ENCODE measurements at regions of chr21 and their contacts with region 1.

Region 1: DNA sequence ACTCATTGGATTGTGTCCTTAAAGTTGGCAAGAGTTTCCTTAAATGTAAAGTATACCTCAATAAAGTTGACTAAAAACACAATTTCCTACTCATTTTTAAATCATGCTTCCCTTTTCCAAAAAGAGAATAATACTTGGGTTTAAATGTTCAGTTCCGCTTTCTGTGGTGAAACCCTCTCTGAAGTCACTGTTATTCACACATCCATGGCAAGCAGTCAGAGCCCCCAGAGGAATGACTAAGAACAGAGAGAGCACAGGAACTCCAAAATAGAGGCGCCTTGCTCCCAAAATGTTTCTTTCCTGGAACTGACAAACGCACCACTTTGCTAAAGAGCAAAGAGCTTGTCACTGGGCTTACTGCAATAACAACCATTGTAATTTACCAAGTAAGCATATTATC is 142.5 kb downstream of the TIAM1 start:
- DNase-seq: peak in 1 of 3 donors; percentile 12
- ATAC-seq: peak; percentile 38
- H3K4me3 ChIP-seq: no peak overlapping the region
- H3K4me1 ChIP-seq: no peaks in the 10 kb centered on the region
- CTCF ChIP-seq: no peak

Region 2: GRCh38 chr21:31580866-31581276 is 379.3 kb after region 1 on chr21:
- intact Hi-C with region 1: loop called (anchors 5 kb)
- DNase-seq: peak in 2 of 3 donors; percentile 74 to 92
- ATAC-seq: peak; percentile 84
- H3K4me3 ChIP-seq: no peak overlapping the region
- H3K4me1 ChIP-seq: no peaks in the 10 kb centered on the region
- CTCF ChIP-seq: peak; percentile 43

Measured in mucosa of descending colon (tissue), 3 donors.